ENCODE measurements at regions of chr12 and their contacts with region 1.

Region 1: GRCh38 chr12:6493497-6494257 is at the start of gene NCAPD2:
- DNase-seq: peak; percentile 85
- ATAC-seq: peak; percentile 85
- H3K4me3 Mint-ChIP-seq: peak within 1 kb of the TSS; percentile 97
- H3K27ac Mint-ChIP-seq: peak within 1 kb of the TSS; percentile 96
- H3K4me1 Mint-ChIP-seq: peaks cover 28% of the 10 kb centered on the region
- H3K27me3 Mint-ChIP-seq: no peaks in the 10 kb centered on the region
- CTCF ChIP-seq: no peak
- total RNA-seq, gene NCAPD2: 38.4 and 40.9 TPM in 2 replicates

Region 2: GRCh38 chr12:6430124-6430989 is 63.3 kb before region 1 on chr12:
- CTCF ChIA-PET with region 1: no interaction called
- POLR2A ChIA-PET with region 1: interaction called, 20 read pairs
- intact Hi-C with region 1: no loop called
- DNase-seq: no peak
- ATAC-seq: no peak
- H3K4me3 Mint-ChIP-seq: peak overlapping the region; percentile 58
- H3K27ac Mint-ChIP-seq: peak overlapping the region; percentile 65
- H3K4me1 Mint-ChIP-seq: peaks cover 72% of the 10 kb centered on the region
- H3K27me3 Mint-ChIP-seq: no peaks in the 10 kb centered on the region
- CTCF ChIP-seq: no peak

Region 3: DNA sequence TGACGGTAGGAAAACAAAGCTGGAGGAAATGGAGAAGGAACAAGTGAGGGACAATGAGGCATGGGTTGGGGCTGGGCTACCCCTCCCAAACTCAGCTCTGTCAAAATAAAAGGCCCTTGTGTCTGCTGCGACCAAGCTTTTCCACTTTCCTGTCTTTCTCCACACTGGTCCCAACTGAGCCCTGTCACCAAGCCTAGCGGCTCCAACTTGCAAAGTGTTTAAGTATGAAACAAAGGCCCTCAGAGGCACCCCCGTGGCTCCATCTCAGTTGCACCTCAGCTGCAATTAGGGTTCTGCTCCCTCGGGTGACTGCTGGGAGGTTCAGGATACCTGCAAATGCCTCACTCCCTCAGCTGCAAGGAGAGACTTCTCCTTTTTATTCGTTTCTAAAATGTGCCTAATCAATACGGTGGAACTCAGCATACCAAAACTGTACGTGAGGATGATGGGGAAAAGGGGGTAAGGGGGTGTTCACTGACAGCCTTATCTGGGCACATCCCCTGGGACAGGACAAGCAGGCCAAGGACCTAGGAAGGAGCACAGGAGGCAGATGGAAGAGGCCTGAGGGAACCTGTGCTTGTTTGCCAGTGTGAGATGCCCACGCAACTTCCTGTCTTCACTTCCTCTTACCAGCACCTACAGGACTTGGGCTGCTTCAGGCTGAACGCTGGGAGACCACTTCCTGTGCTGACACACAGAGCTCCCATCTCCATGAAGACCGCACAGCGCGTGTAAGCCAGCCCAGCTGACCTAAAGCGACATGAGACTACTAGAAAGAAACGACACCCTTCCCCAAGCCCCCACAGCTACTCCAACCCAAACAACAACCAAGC is 32.1 kb before region 1 on chr12:
- CTCF ChIA-PET with region 1: interaction called, 4 read pairs
- POLR2A ChIA-PET with region 1: interaction called, 26 read pairs
- intact Hi-C with region 1: no loop called
- DNase-seq: peak; percentile 70
- ATAC-seq: peak; percentile 91
- H3K4me3 Mint-ChIP-seq: peak overlapping the region; percentile 70
- H3K27ac Mint-ChIP-seq: peak overlapping the region; percentile 99
- H3K4me1 Mint-ChIP-seq: peaks cover 89% of the 10 kb centered on the region
- H3K27me3 Mint-ChIP-seq: no peaks in the 10 kb centered on the region
- CTCF ChIP-seq: no peak

Region 4: GRCh38 chr12:6540181-6540877 is 46.7 kb after region 1 on chr12:
- CTCF ChIA-PET with region 1: interaction called, 11 read pairs
- POLR2A ChIA-PET with region 1: interaction called, 33 read pairs
- intact Hi-C with region 1: no loop called
- DNase-seq: no peak
- ATAC-seq: peak; percentile 45
- H3K4me3 Mint-ChIP-seq: peak overlapping the region; percentile 77
- H3K27ac Mint-ChIP-seq: peak overlapping the region; percentile 74
- H3K4me1 Mint-ChIP-seq: peaks cover 46% of the 10 kb centered on the region
- H3K27me3 Mint-ChIP-seq: no peaks in the 10 kb centered on the region
- CTCF ChIP-seq: no peak

Region 5: GRCh38 chr12:6627616-6628015 is 133.9 kb after region 1 on chr12:
- CTCF ChIA-PET with region 1: no interaction called
- POLR2A ChIA-PET with region 1: no interaction called
- intact Hi-C with region 1: no loop called
- DNase-seq: no peak
- ATAC-seq: peak; percentile 37
- H3K4me3 Mint-ChIP-seq: peak overlapping the region; percentile 81
- H3K27ac Mint-ChIP-seq: peak overlapping the region; percentile 85
- H3K4me1 Mint-ChIP-seq: peaks cover 60% of the 10 kb centered on the region
- H3K27me3 Mint-ChIP-seq: no peaks in the 10 kb centered on the region
- CTCF ChIP-seq: no peak

Region 6: DNA sequence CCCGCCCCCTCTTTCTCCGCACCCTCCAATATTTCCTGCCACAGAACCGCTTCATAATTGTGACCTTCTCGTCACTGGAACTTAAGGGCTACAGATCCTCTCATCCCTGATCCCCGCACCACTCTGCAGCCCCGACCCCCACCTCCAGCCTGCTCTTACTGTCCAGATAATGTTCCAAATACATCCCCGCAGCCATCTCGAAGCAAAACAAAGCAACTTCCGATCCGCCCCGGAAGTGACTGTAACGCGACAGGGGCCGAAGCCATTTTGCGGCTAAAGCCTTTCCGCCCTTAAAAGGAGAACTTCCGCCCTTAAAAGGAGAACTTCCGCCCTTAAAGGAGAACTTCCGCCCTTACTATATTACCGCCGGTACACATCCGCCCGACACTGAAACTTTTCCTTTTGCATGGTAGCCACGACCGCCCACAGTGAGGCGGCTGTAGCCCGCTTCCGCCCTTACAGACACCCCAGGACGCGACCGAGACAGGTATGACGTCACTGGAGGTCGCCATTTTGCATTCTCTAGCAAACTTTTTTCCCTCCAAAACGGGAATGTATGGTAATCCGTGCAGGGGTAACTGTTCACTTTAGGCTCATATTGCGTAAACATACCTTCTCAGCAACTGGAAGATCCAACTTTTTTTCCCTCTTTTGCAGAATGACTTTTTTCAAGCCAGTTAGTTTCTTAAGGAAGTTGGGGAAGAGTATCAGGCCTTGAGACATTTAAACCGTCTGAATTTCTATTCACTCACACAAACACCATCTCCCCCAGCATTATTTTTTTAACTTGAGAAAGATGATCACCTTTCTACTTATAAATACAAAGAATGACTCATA is 169.4 kb after region 1 on chr12 and contains the start of gene ING4:
- CTCF ChIA-PET with region 1: no interaction called
- POLR2A ChIA-PET with region 1: no interaction called
- intact Hi-C with region 1: loop called (anchors 1 kb)
- DNase-seq: peak; percentile 80
- ATAC-seq: peak; percentile 97
- H3K4me3 Mint-ChIP-seq: peak within 1 kb of the TSS; percentile 97
- H3K27ac Mint-ChIP-seq: peak within 1 kb of the TSS; percentile 95
- H3K4me1 Mint-ChIP-seq: peaks cover 27% of the 10 kb centered on the region
- H3K27me3 Mint-ChIP-seq: no peaks in the 10 kb centered on the region
- CTCF ChIP-seq: no peak
- total RNA-seq, gene ING4: 31.6 and 39.2 TPM in 2 replicates

Measured in activated B cell treated with CpG ODN at 0.5 μM for 24 hours (primary cell).